Activated T-helper 1 cell treated with anti-CD3 and anti-CD28 coated beads, Interleukin-12 subunit alpha, Interleukin-12 subunit beta, Interleukin-2, Interleukin-4 antibody, amounts not matched to agents 30 ng/mL and 10 ng/mL and 1 ng/mL, durations not matched to agents 14 hours and 24 hours and 36 hours (primary cell): ENCODE measurements at regions of chr5 and their contacts with region 1.

Region 1: DNA sequence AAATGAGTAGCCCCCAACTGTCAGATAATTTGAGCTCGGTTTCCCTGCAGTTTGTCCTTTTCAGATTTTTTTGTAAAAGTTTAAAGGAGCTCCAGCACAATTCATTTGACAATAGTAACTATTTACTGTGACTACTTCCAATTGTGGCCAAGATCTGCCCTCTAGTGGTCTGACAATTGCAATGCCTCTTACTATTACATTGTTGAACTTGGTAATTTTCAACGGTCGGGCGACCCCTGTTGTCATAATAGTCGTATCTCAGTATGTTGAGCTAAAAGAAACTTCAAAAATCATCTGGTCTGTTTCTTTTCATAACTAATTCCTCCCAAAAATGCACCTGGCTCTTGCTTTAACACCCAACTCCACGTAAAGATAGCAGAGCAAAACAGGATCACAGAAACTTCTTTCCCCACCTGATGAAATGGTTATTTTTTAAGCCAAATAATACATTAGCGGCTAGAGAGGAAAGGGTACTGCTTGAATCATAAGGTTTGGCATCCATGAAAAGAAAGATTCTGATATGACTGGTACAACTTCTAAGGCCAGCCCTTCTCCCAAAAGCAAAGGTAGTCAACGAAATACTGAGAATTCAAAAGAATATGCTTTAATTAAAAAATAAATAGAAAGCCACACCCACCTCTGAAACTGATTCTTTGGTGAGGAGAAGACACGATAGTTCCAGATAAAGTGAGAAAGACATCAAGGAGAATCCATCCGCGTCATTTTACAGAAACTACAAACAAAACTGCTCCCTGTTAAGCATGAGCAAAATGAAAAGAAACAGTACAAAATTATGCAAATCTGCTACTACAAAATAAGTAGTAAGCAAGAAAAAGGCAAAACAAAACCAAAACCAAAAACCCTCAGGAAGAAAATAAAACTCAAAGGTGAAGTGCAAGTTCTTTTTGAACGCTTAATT is 76.9 kb upstream of the HTR4 start:
- DNase-seq: peak; percentile 47
- H3K4me3 Mint-ChIP-seq: no peak overlapping the region
- H3K27ac Mint-ChIP-seq: no peak overlapping the region
- H3K4me1 Mint-ChIP-seq: peaks cover 6% of the 10 kb centered on the region
- H3K27me3 Mint-ChIP-seq: peaks cover 9% of the 10 kb centered on the region

Region 2: GRCh38 chr5:148179234-148179824 is 551.9 kb before region 1 on chr5:
- intact Hi-C with region 1: loop called (anchors 1 kb)
- DNase-seq: no peak
- H3K4me3 Mint-ChIP-seq: no peak overlapping the region
- H3K27ac Mint-ChIP-seq: no peak overlapping the region
- H3K4me1 Mint-ChIP-seq: no peaks in the 10 kb centered on the region
- H3K27me3 Mint-ChIP-seq: peaks cover 7% of the 10 kb centered on the region

Region 3: DNA sequence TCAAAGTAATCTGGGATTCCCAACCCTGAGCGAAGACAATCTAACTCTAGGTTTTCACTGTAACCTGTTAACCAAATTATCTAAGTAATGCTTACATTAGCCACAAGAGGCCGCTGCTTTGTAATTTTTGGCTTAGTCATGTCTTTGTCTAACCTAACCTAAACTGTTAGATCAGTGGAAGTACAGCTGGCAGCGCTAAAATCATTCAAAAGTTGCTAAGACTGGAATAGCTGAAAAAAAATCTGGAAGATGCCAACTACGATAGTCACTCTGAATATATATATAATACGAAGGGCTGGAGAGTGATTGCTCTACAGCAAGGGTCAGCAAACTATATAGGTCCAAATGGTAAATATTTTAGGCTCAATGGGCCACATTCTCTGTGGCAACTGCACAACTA is 287.2 kb before region 1 on chr5:
- intact Hi-C with region 1: loop called (anchors 1 kb)
- DNase-seq: peak; percentile 6
- H3K4me3 Mint-ChIP-seq: no peak overlapping the region
- H3K27ac Mint-ChIP-seq: no peak overlapping the region
- H3K4me1 Mint-ChIP-seq: no peaks in the 10 kb centered on the region
- H3K27me3 Mint-ChIP-seq: peaks cover 3% of the 10 kb centered on the region

Region 4: DNA sequence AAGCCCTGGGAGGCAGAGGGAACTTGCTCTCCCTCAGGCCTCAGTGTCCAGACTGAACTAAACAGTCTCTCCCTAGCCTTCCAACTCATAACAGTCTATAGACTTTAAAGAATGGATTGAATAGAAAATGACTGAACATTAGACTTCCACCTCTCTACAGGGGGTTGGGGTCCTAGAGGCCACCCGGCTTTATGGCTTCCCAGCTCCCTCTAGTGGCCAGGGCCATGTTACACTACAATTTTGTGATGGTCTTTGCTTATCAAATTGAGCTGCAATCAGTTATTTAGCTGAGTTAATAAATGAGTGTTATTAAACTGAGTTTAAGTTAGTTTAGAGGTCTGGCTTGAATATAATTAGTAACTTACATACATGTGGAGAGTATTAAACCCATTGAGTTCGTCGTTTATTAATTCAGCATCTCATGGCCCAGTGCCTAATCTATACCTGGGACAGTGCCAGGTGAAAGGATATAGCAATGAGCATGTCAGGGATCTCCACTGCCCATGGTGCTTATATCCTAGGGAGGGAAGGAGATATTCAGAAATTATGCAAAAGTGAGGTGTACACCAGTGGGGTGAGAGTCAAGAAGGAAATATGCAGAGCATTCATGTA is 226.5 kb after region 1 on chr5:
- intact Hi-C with region 1: loop called (anchors 2 kb)
- DNase-seq: no peak
- H3K4me3 Mint-ChIP-seq: no peak overlapping the region
- H3K27ac Mint-ChIP-seq: no peak overlapping the region
- H3K4me1 Mint-ChIP-seq: no peaks in the 10 kb centered on the region
- H3K27me3 Mint-ChIP-seq: peaks cover 7% of the 10 kb centered on the region

Region 5: DNA sequence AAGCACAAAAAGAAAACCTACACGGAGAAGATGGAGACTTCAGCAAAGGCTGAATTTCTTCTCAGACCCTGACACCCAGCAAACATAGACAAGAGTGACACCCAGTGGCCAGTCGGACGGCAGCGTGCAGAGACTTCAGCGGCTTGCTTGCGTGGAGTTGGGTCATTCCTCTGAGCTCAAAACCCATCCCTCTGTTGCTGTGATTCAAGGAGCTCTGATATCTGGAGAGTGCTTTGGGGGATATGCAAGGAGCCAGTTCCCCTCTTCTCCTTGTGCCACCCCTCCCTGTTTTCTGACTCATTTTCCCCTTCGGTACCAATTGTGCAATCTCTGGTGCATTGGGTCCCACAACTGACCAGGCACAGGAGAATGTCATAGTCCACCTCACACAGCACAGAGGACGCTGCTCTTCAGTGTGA is 304.2 kb after region 1 on chr5:
- intact Hi-C with region 1: loop called (anchors 1 kb)
- DNase-seq: peak; percentile 41
- H3K4me3 Mint-ChIP-seq: no peak overlapping the region
- H3K27ac Mint-ChIP-seq: no peak overlapping the region
- H3K4me1 Mint-ChIP-seq: peaks cover 39% of the 10 kb centered on the region
- H3K27me3 Mint-ChIP-seq: peaks cover 5% of the 10 kb centered on the region

Region 6: DNA sequence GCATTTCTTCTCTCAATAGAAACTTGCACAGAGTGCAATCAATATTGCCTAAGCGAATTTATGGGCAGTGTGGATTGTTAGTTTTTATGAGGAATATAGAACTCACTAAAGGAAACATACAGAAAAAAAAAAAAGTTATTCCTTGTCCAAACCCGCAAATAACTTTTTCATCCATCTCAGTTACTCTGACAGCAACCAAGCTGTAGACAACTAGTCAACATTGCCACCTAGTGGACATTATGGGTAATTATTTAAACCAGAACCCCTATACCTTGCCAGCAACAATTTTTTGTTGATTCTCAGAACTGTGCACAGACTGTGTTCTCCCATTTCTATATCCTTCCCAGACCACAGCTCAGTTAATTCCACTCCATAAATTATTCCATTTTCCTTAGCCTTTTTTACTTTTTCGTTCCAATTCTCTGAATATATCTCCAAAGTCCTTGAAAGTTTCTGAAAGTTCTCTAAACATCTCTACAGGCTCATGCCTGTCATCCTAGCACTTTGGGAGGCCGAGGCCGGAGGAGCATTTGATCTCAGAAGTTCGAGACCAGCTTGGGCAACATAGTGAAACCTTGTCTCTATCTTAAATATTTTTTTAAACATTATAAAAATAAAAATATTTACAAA is 537.8 kb after region 1 on chr5:
- intact Hi-C with region 1: loop called (anchors 1 kb)
- DNase-seq: no peak
- H3K4me3 Mint-ChIP-seq: no peak overlapping the region
- H3K27ac Mint-ChIP-seq: no peak overlapping the region
- H3K4me1 Mint-ChIP-seq: peaks cover 5% of the 10 kb centered on the region
- H3K27me3 Mint-ChIP-seq: peaks cover 44% of the 10 kb centered on the region

Region 7: GRCh38 chr5:149794487-149794971 is 1063.3 kb after region 1 on chr5:
- intact Hi-C with region 1: no loop called
- DNase-seq: no peak
- H3K4me3 Mint-ChIP-seq: no peak overlapping the region
- H3K27ac Mint-ChIP-seq: no peak overlapping the region
- H3K4me1 Mint-ChIP-seq: no peaks in the 10 kb centered on the region
- H3K27me3 Mint-ChIP-seq: no peaks in the 10 kb centered on the region